ENCODE measurements at regions of chr19 and their contacts with region 1.

Region 1: DNA sequence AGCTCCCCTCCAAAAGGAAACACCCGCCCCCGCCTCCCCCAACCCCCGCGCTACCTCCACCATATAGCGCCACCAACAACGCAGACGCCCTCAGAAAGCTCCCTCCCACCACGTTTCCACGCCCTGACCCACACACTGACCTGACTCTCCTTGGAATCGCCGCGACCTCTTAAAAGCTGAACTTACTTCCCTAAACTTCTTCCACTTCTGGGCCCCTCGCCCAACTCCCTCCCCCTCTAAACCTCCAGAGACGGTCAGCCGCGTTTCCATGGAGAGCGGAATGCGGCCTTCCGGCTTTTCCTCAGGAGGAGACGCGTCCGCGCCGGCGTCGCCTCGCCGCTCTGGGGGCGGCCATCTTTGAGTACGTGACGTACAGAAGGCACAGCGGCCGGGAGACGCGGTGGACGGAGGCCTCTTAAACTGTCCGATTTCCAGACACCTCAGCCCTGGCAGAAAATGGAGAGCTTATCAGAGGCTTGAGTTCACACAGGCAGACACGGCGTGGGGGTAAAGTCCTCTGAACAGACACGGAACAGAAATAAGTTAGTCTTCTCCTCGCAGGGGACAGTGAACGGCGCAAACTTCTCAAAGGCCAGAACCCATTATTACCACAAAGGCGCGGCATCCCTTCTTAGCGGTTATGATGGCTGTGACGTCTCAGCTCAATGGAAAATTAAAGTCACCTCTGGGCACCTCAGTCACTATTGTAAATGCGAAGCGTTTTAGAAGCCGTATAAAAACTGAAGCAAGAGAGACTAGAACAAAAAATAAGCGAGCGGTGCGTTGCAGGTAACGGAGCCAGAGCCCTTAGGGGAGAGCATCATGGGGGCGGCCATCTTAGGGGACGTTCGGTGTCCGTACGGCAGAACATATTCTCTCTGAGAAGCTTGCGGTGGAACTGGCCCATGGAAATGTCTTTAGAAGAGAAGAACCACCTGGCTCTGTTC is at the start of gene ZNF432:
- DNase-seq: peak; percentile 96 to 97
- ATAC-seq: peak; percentile 99
- H3K4me3 ChIP-seq: peak within 1 kb of the TSS; percentile 74
- H3K27ac ChIP-seq: peak within 1 kb of the TSS; percentile 92
- H3K4me1 ChIP-seq: no peaks in the 10 kb centered on the region
- H3K27me3 ChIP-seq: no peaks in the 10 kb centered on the region
- CTCF ChIP-seq: no peak
- total RNA-seq, gene ZNF432: 3.1 to 6.4 (median 4.5) TPM

Region 2: DNA sequence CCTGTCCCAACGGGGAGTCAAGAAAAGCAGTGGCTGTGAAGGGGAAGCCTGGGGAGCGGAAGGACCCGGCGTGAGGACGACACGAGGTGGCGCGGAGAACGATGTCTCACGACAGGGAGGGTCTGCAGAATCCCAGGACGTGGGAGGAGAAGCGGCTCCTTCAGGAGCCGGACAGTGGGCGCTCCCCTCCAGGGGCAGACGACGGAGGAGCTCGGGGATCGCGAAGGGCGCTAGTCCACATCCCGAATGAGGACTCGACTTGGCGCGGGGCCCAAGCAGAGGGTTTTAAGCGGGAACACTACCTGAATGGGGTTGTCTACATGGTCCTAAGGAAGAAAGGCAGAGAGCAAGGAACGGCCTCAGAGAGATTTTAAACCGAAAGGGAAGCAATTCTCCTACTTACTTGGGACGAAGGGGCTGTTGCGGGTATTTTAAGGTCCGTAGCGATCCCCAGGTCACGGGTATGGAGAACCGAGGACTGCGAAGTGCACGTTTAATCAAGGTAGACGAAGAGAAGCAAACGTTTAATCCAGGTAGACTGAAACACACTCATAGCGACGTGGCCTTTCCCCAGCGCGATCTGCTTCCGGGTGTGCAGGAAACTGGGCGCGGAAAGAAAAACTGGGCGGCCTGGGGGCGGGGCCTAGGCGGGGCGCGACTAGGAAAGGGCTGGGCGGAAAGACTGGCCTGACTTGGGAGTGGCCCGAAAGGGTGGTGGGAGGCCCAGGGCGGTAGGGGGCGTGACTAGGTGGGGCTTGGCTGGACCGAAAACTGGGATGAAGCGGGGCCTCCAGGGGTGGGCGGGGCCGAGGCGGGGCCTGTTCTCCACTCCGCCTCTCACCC is 46.6 kb after region 1 on chr19 and contains the start of gene ZNF841:
- intact Hi-C with region 1: loop called in 1 of 2 experiments (anchors 5 kb)
- DNase-seq: peak; percentile 96
- ATAC-seq: peak; percentile 99 to 100 (median 100)
- H3K4me3 ChIP-seq: peak within 1 kb of the TSS; percentile 98
- H3K27ac ChIP-seq: peak within 1 kb of the TSS; percentile 72
- H3K4me1 ChIP-seq: peaks cover 5% of the 10 kb centered on the region
- H3K27me3 ChIP-seq: no peaks in the 10 kb centered on the region
- CTCF ChIP-seq: no peak
- total RNA-seq, gene ZNF841: 3.0 to 4.4 (median 3.2) TPM